A549 (cell line): ENCODE measurements at regions of chr17 and their contacts with region 1.

Region 1: GRCh38 chr17:76014184-76014924 is 12.8 kb downstream of the EVPL start:
- DNase-seq: peak; percentile 76 to 87
- ATAC-seq: peak; percentile 86 to 96
- H3K4me3 ChIP-seq: no peak overlapping the region
- H3K27ac ChIP-seq: peak overlapping the region in 1 of 2 experiments; percentile 26; a peak in 1 of 6 replicates
- H3K4me1 ChIP-seq: no peaks in the 10 kb centered on the region
- CTCF ChIP-seq: peak; percentile 97
- EP300 ChIP-seq: no peak
- POLR2A ChIP-seq: no peak
- RAD21 ChIP-seq: peak; percentile 88 to 90

Region 2: GRCh38 chr17:75978938-75979704 is 35.2 kb before region 1 on chr17 and contains the starts of genes ACOX1 and TEN1:
- CTCF ChIA-PET with region 1: interaction called, 10 read pairs
- POLR2A ChIA-PET with region 1: no interaction called
- DNase-seq: peak; percentile 93 to 99
- ATAC-seq: peak; percentile 95 to 97
- H3K4me3 ChIP-seq: peak within 1 kb of the TSS; percentile 84
- H3K27ac ChIP-seq: peak within 1 kb of the TSS; percentile 90 to 93
- H3K4me1 ChIP-seq: peaks cover 43% of the 10 kb centered on the region
- CTCF ChIP-seq: peak; percentile 21; the same call in 2 of the 3 replicates
- EP300 ChIP-seq: no peak
- POLR2A ChIP-seq: peak; percentile 92
- RAD21 ChIP-seq: no peak
- polyA plus RNA-seq, gene ACOX1: 31.1 and 34.3 TPM in 2 replicates
- polyA plus RNA-seq, gene TEN1: 11.8 TPM in 2 replicates

Region 3: GRCh38 chr17:76053246-76054116 is 39.1 kb after region 1 on chr17:
- CTCF ChIA-PET with region 1: interaction called, 357 read pairs
- POLR2A ChIA-PET with region 1: no interaction called
- DNase-seq: peak; percentile 27 to 45
- ATAC-seq: peak in 1 of 2 experiments; percentile 50; a peak in 3 of 6 replicates
- H3K4me3 ChIP-seq: no peak overlapping the region
- H3K27ac ChIP-seq: no peak overlapping the region
- H3K4me1 ChIP-seq: peaks cover 7% of the 10 kb centered on the region; the same call in 2 of the 3 replicates
- CTCF ChIP-seq: no peak
- EP300 ChIP-seq: no peak
- POLR2A ChIP-seq: no peak
- RAD21 ChIP-seq: no peak

Region 4: GRCh38 chr17:76079956-76080767 is 65.8 kb after region 1 on chr17:
- CTCF ChIA-PET with region 1: interaction called, 15 read pairs
- POLR2A ChIA-PET with region 1: no interaction called
- DNase-seq: no peak
- ATAC-seq: peak in 1 of 2 experiments; percentile 12; a peak in 2 of 6 replicates
- H3K4me3 ChIP-seq: no peak overlapping the region
- H3K27ac ChIP-seq: no peak overlapping the region; a peak in 1 of 6 replicates
- H3K4me1 ChIP-seq: peaks cover 10% of the 10 kb centered on the region
- CTCF ChIP-seq: no peak
- EP300 ChIP-seq: no peak
- POLR2A ChIP-seq: no peak
- RAD21 ChIP-seq: no peak

Region 5: DNA sequence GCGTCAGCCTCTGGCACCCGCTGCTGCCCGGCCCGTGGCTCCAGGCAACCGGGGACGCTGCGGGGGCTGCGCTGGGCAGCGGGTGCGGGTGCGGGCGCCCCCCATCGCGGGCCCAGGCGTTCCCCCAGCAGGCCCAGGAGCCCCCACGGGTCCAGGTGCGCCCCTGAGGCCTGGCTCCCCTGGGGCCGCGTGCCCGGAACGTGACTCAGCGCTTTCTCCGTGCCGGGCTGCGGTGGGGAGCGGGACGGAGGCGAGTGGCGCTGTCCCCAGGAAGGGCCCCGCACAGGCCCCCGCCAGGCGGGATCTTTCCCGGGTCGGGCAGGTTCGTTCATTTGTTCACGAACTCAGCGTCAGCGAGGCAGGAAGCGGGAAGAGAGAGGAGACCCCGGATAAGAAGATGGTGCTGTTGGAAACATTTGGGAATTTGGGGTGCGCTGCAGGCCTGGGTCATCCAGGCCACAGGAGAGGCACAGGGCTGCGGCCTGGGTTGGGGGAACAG is 107.6 kb after region 1 on chr17:
- CTCF ChIA-PET with region 1: interaction called, 19 read pairs
- POLR2A ChIA-PET with region 1: no interaction called
- DNase-seq: no peak
- ATAC-seq: peak in 1 of 2 experiments; percentile 3; a peak in 2 of 6 replicates
- H3K4me3 ChIP-seq: peak overlapping the region; percentile 2; the same call in 1 of the 3 replicates
- H3K27ac ChIP-seq: peak overlapping the region; percentile 68 to 90
- H3K4me1 ChIP-seq: peaks cover 5% of the 10 kb centered on the region
- CTCF ChIP-seq: no peak
- EP300 ChIP-seq: no peak
- POLR2A ChIP-seq: no peak
- RAD21 ChIP-seq: no peak